ENCODE measurements at regions of chr9 and their contacts with region 1.

Region 1: DNA sequence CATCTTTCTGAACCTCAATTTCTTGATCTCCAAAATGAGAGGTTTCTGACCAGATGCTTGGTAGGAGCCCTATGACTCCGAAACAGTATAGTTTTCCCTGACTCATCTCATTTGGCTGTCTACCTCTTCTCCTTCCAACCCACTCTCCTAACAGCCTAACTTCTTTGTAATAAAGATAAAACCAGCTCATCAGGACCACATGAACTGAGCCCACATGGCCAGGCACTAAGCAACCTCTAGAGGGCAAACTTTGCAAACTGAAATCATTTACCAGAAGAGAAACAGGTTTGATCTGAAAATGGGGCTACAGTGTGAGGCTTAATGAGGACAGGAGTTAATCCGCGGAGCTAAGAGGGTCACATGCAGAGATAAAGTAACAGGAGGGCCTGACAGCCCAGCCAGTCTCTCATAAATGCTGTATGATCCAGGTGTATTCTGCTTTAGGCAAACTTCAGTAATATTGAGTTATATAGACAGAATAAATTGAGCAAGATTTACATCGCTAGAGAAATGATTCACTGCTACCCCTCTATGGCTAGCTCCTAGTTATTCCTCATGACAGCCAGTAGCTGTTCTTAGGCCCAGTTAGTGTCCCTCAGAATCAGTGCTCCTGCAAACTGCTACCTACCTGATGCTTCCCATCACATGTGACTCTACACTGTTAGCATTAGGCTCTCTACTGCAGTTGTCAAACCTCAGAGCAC is 64.6 kb downstream of the ABCA1 start:
- DNase-seq: peak; percentile 7
- ATAC-seq: peak; percentile 95
- H3K4me3 ChIP-seq: no peak overlapping the region
- H3K27ac ChIP-seq: no peak overlapping the region
- H3K4me1 ChIP-seq: peaks cover under 1% of the 10 kb centered on the region
- H3K27me3 ChIP-seq: no peaks in the 10 kb centered on the region
- CTCF ChIP-seq: peak; percentile 78 to 85 (median 82); a peak in 5 of 6 replicates
- EP300 ChIP-seq: no peak
- POLR2A ChIP-seq: no peak
- RAD21 ChIP-seq: peak; percentile 92

Region 2: GRCh38 chr9:104780799-104781395 is 82.4 kb before region 1 on chr9:
- CTCF ChIA-PET with region 1: interaction called, 17 read pairs
- POLR2A ChIA-PET with region 1: no interaction called
- RAD21 ChIA-PET with region 1: interaction called, 6 read pairs
- SMC1A ChIA-PET with region 1: interaction called, 6 read pairs
- in situ Hi-C with region 1: no loop called
- intact Hi-C with region 1: loop called (anchors 2 kb)
- DNase-seq: no peak
- ATAC-seq: peak; percentile 62
- H3K4me3 ChIP-seq: no peak overlapping the region
- H3K27ac ChIP-seq: no peak overlapping the region
- H3K4me1 ChIP-seq: peaks cover 13% of the 10 kb centered on the region
- H3K27me3 ChIP-seq: no peaks in the 10 kb centered on the region
- CTCF ChIP-seq: peak; percentile 34 to 63 (median 50); a peak in 5 of 6 replicates
- EP300 ChIP-seq: no peak
- POLR2A ChIP-seq: no peak
- RAD21 ChIP-seq: peak; percentile 86

Region 3: DNA sequence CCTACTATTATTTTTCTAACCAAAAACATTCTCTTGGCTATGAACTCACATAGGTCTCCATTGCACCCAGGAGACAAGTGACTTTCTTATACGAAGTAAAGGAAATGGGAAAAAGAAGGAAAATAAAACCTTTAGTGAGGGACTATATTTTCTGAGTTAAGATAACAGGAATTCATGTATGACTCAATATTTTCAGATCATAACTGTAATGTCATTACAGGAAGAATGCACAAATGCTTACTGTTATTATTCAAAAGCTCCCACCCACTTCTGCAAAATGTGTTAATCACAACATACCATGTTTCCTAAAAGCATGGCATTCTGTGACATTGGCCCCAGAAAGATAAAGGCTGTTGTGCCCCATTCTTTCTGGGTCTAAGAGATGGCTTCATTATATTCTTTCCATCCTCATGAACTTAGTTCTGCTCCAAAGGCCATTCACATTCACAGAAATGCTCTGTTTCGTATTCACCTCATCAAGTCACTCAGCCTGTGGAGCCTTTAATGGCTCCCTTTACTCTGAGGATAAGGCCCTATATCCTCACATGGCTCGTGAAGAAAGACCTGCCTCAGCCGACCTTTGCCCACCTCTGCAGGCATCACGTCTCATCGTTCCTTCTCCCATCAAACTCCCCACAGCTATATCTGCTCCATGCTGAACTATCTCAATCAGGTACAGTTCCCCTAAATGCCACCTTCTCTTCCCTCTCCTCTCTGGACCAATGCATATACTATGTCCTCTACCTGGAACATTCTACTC is 12.4 kb before region 1 on chr9:
- CTCF ChIA-PET with region 1: interaction called, 10 read pairs
- POLR2A ChIA-PET with region 1: no interaction called
- RAD21 ChIA-PET with region 1: interaction called, 3 read pairs
- SMC1A ChIA-PET with region 1: interaction called, 3 read pairs
- in situ Hi-C with region 1: no loop called
- intact Hi-C with region 1: no loop called
- DNase-seq: no peak
- ATAC-seq: no peak
- H3K4me3 ChIP-seq: no peak overlapping the region
- H3K27ac ChIP-seq: no peak overlapping the region
- H3K4me1 ChIP-seq: no peaks in the 10 kb centered on the region
- H3K27me3 ChIP-seq: no peaks in the 10 kb centered on the region; a peak in 1 of 4 replicates
- CTCF ChIP-seq: no peak
- EP300 ChIP-seq: no peak
- POLR2A ChIP-seq: no peak
- RAD21 ChIP-seq: no peak

Region 4: DNA sequence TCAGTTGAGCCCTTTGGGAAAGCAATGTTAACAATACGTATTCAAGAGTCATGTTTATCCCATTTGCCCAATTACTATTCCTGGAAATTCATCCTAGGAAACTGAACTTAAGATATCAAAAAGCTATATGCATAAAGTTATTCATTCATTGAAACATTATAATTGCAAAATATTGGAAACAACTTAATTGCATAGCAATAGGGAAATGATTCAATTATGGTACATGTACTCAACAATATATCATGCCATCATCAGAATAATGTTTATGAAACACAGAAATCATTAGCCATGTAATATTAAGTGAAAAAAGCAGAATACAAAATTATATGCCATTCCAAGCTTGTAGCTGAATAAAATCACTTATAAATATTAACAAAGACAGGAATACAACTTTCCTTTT is 29.4 kb after region 1 on chr9:
- CTCF ChIA-PET with region 1: interaction called, 11 read pairs
- POLR2A ChIA-PET with region 1: no interaction called
- RAD21 ChIA-PET with region 1: no interaction called
- SMC1A ChIA-PET with region 1: interaction called, 3 read pairs
- in situ Hi-C with region 1: no loop called
- intact Hi-C with region 1: no loop called
- DNase-seq: no peak
- ATAC-seq: no peak
- H3K4me3 ChIP-seq: no peak overlapping the region
- H3K27ac ChIP-seq: no peak overlapping the region
- H3K4me1 ChIP-seq: no peaks in the 10 kb centered on the region
- H3K27me3 ChIP-seq: no peaks in the 10 kb centered on the region
- CTCF ChIP-seq: no peak
- EP300 ChIP-seq: no peak
- POLR2A ChIP-seq: no peak
- RAD21 ChIP-seq: no peak

Measured in GM12878 (cell line).